IMR-90 (cell line): ENCODE measurements at regions of chr19 and their contacts with region 1.

Region 1: GRCh38 chr19:38229585-38230073 is 5.6 kb upstream of the DPF1 start:
- DNase-seq: peak; percentile 91
- ATAC-seq: peak; percentile 98
- H3K4me3 ChIP-seq: no peak overlapping the region
- H3K27ac ChIP-seq: no peak overlapping the region
- H3K4me1 ChIP-seq: no peaks in the 10 kb centered on the region
- H3K27me3 ChIP-seq: peaks cover 3% of the 10 kb centered on the region; the same call in 1 of the 2 replicates
- CTCF ChIP-seq: no peak
- POLR2A ChIP-seq: no peak
- RAD21 ChIP-seq: no peak

Region 2: DNA sequence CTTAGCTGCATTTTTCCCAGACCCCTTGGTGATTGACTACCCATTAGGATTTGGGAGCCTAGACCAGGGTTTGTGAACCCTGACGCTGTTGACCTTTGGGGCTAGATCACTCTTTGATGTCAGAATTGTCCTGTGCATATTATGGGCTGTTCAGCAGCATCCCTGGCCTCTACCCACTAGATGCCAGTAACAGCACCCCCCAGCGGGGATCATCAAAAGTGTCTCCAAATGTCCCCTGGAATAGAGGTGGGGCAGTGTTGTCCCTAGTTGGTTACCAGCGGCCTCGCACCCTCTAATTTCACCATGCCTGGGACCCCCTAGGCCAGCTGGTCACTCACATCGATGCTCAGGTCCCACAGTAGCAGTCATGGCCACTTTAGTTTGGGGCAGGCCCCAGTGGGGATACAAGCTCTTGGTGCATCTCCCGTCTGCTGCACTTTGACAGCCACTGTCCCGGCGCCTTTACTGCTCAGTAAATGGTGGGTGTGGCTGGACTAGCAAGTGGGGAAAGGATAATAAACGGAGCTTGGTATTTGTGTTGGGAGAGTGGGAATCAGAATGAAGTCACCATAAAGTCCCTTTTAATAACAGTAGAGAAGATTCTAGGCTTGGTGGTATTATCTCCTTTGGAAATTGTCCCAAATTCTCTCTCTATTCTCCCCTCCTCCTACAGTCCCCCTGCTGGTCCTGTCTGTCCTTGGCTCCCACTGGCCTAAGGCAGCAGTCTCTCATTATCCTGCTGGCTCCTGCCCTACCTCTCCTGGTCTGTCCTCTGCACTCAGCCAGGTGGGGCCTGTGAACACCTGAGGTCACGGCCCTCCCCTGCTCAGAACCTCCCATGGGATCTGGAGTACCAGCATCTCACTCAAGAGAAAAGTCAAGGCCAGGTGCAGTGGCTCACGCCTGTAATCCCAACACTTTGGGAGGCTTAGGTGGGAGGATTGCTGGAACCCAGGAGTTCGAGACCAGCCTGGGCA is 242.0 kb before region 1 on chr19:
- CTCF ChIA-PET with region 1: no interaction called
- POLR2A ChIA-PET with region 1: no interaction called
- dilution Hi-C with region 1: no loop called
- in situ Hi-C with region 1: no loop called
- intact Hi-C with region 1: no loop called
- DNase-seq: no peak
- ATAC-seq: no peak
- H3K4me3 ChIP-seq: no peak overlapping the region
- H3K27ac ChIP-seq: no peak overlapping the region
- H3K4me1 ChIP-seq: peaks cover 21% of the 10 kb centered on the region
- H3K27me3 ChIP-seq: no peaks in the 10 kb centered on the region
- CTCF ChIP-seq: peak; percentile 14; the same call in 1 of the 2 replicates
- POLR2A ChIP-seq: no peak
- RAD21 ChIP-seq: no peak

Region 3: GRCh38 chr19:38335949-38336637 is 106.5 kb after region 1 on chr19:
- CTCF ChIA-PET with region 1: interaction called, 6 read pairs
- POLR2A ChIA-PET with region 1: no interaction called
- dilution Hi-C with region 1: no loop called
- in situ Hi-C with region 1: loop called (anchors 5 kb)
- intact Hi-C with region 1: loop called (anchors 1 kb)
- DNase-seq: peak; percentile 92
- ATAC-seq: peak; percentile 88
- H3K4me3 ChIP-seq: peak overlapping the region; percentile 77
- H3K27ac ChIP-seq: peak overlapping the region; percentile 55
- H3K4me1 ChIP-seq: no peaks in the 10 kb centered on the region
- H3K27me3 ChIP-seq: no peaks in the 10 kb centered on the region
- CTCF ChIP-seq: no peak
- POLR2A ChIP-seq: no peak; the same call in 1 of the 2 replicates
- RAD21 ChIP-seq: no peak

Region 4: GRCh38 chr19:38367041-38367440 is 137.4 kb after region 1 on chr19:
- CTCF ChIA-PET with region 1: no interaction called
- POLR2A ChIA-PET with region 1: interaction called, 11 read pairs
- dilution Hi-C with region 1: no loop called
- in situ Hi-C with region 1: no loop called
- intact Hi-C with region 1: no loop called
- DNase-seq: no peak
- ATAC-seq: no peak
- H3K4me3 ChIP-seq: no peak overlapping the region
- H3K27ac ChIP-seq: no peak overlapping the region
- H3K4me1 ChIP-seq: no peaks in the 10 kb centered on the region
- H3K27me3 ChIP-seq: peaks cover 25% of the 10 kb centered on the region
- CTCF ChIP-seq: no peak
- POLR2A ChIP-seq: no peak
- RAD21 ChIP-seq: no peak

Region 5: GRCh38 chr19:38387550-38388348 is 158.1 kb after region 1 on chr19 and contains the start of gene GGN:
- CTCF ChIA-PET with region 1: no interaction called
- POLR2A ChIA-PET with region 1: interaction called, 3 read pairs
- dilution Hi-C with region 1: no loop called
- in situ Hi-C with region 1: no loop called
- intact Hi-C with region 1: loop called (anchors 5 kb)
- DNase-seq: peak; percentile 93
- ATAC-seq: peak; percentile 81
- H3K4me3 ChIP-seq: peak within 1 kb of the TSS; percentile 67
- H3K27ac ChIP-seq: peak within 1 kb of the TSS; percentile 90
- H3K4me1 ChIP-seq: peaks cover 2% of the 10 kb centered on the region
- H3K27me3 ChIP-seq: no peaks in the 10 kb centered on the region
- CTCF ChIP-seq: no peak
- POLR2A ChIP-seq: peak; percentile 34; the same call in 1 of the 2 replicates
- RAD21 ChIP-seq: no peak
- total RNA-seq, gene GGN: under 0.01 TPM in 1 of 2 replicates, not detected in the other

Region 6: GRCh38 chr19:38514812-38515633 is 285.4 kb after region 1 on chr19:
- CTCF ChIA-PET with region 1: no interaction called
- POLR2A ChIA-PET with region 1: no interaction called
- dilution Hi-C with region 1: no loop called
- in situ Hi-C with region 1: no loop called
- intact Hi-C with region 1: loop called (anchors 10 kb)
- DNase-seq: peak; percentile 37
- ATAC-seq: peak; percentile 99
- H3K4me3 ChIP-seq: no peak overlapping the region
- H3K27ac ChIP-seq: no peak overlapping the region
- H3K4me1 ChIP-seq: no peaks in the 10 kb centered on the region
- H3K27me3 ChIP-seq: peaks cover 15% of the 10 kb centered on the region
- CTCF ChIP-seq: peak; percentile 83
- POLR2A ChIP-seq: no peak
- RAD21 ChIP-seq: peak; percentile 90

Region 7: GRCh38 chr19:38634757-38635482 is 405.3 kb after region 1 on chr19:
- CTCF ChIA-PET with region 1: no interaction called
- POLR2A ChIA-PET with region 1: no interaction called
- dilution Hi-C with region 1: no loop called
- in situ Hi-C with region 1: loop called (anchors 25 kb)
- intact Hi-C with region 1: loop called (anchors 10 kb)
- DNase-seq: peak; percentile 54
- ATAC-seq: peak; percentile 85
- H3K4me3 ChIP-seq: no peak overlapping the region
- H3K27ac ChIP-seq: no peak overlapping the region
- H3K4me1 ChIP-seq: no peaks in the 10 kb centered on the region
- H3K27me3 ChIP-seq: no peaks in the 10 kb centered on the region
- CTCF ChIP-seq: peak; percentile 79
- POLR2A ChIP-seq: no peak
- RAD21 ChIP-seq: peak; percentile 69

Region 8: DNA sequence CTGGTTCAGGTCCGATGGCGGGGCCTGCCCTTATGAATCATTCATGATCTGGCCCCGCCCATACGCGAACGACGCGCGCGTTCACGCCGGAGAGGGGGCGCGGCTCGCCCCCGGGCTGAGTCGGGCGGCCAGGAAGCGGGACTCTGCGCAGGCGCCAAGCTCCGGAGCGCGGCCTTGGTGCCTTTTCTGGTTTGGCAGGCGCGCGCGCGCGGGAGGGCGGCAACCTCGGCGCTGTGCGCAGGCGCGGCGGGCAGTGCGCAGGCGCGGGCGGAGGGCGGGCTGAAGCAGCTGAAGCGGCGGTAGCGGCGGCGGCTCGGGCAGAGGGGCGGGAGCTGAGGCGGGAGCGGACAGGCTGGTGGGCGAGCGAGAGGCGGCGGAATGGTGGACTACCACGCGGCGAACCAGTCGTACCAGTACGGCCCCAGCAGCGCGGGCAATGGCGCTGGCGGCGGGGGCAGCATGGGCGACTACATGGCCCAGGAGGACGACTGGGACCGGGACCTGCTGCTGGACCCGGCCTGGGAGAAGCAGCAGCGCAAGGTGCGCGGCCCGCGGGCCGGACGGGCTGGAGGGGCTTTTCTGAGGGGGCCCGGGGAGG is 417.8 kb after region 1 on chr19 and contains the start of gene ACTN4:
- CTCF ChIA-PET with region 1: no interaction called
- POLR2A ChIA-PET with region 1: no interaction called
- dilution Hi-C with region 1: no loop called
- in situ Hi-C with region 1: loop called (anchors 25 kb)
- intact Hi-C with region 1: no loop called
- DNase-seq: peak; percentile 94
- ATAC-seq: peak; percentile 87
- H3K4me3 ChIP-seq: peak within 1 kb of the TSS; percentile 80
- H3K27ac ChIP-seq: peak within 1 kb of the TSS; percentile 91
- H3K4me1 ChIP-seq: peaks cover 21% of the 10 kb centered on the region
- H3K27me3 ChIP-seq: no peaks in the 10 kb centered on the region
- CTCF ChIP-seq: no peak
- POLR2A ChIP-seq: peak; percentile 98
- RAD21 ChIP-seq: peak; percentile 16; the same call in 1 of the 2 replicates
- total RNA-seq, gene ACTN4: 614 and 659 TPM in 2 replicates